ENCODE measurements at regions of chr18 and their contacts with region 1.

Region 1: GRCh38 chr18:59308248-59308937 is 10.1 kb downstream of the CPLX4 start:
- DNase-seq: peak; percentile 71
- ATAC-seq: peak; percentile 91
- H3K4me3 Mint-ChIP-seq: peak overlapping the region; percentile 36
- H3K27ac Mint-ChIP-seq: no peak overlapping the region
- H3K4me1 Mint-ChIP-seq: no peaks in the 10 kb centered on the region
- H3K27me3 Mint-ChIP-seq: peaks cover 33% of the 10 kb centered on the region
- CTCF ChIP-seq: peak; percentile 83

Region 2: GRCh38 chr18:59318460-59319050 is 10.2 kb after region 1 on chr18 and contains the start of gene CPLX4:
- CTCF ChIA-PET with region 1: interaction called, 20 read pairs
- POLR2A ChIA-PET with region 1: no interaction called
- intact Hi-C with region 1: no loop called
- DNase-seq: no peak
- ATAC-seq: no peak
- H3K4me3 Mint-ChIP-seq: no peak within 1 kb of the TSS
- H3K27ac Mint-ChIP-seq: no peak within 1 kb of the TSS
- H3K4me1 Mint-ChIP-seq: no peaks in the 10 kb centered on the region
- H3K27me3 Mint-ChIP-seq: peaks cover 25% of the 10 kb centered on the region
- CTCF ChIP-seq: no peak
- total RNA-seq, gene CPLX4: not detected